ENCODE measurements at regions of chr6 and their contacts with region 1.

Region 1: DNA sequence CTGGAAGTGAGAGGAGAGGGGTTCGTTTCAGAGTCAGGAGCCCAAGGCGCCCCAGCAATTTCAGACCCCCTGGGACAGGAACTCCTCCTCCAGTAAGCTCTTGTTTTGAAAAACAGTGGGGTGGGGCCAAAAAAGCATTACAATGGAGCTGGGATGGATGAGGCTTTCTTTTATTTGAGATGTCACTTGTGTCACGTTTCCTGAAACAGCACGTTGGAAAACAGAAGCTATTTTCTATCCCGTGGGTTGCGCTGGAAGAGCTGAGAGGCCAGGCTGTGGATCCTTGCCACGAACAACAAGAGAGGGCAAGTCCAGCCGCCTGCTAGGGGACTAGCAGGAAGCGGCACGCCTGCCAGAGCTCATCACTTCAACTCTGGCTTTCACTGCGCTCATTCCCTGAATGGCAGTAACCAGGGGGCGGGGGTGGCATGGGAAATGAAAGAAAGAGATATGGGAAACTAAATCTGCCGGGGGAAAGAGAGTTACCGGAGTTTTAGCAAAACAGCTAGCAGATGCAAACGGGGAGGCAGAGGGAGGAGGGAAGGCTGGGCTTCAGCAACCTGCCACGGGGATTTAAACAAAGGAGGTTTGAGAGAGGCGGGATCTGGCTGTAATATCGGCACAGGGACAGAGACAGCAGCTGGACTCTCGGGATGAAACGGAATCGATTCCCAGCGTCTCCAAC is 34.6 kb downstream of the GCNT2 start:
- DNase-seq: no peak
- ATAC-seq: no peak
- H3K4me3 ChIP-seq: no peak overlapping the region
- H3K4me3 Mint-ChIP-seq: no peak overlapping the region
- H3K27ac ChIP-seq: no peak overlapping the region
- H3K27ac Mint-ChIP-seq: no peak overlapping the region
- H3K4me1 ChIP-seq: peaks cover 10 to 15% of the 10 kb centered on the region in 2 donors
- H3K4me1 Mint-ChIP-seq: peaks cover 56% of the 10 kb centered on the region
- H3K27me3 ChIP-seq: no peaks in the 10 kb centered on the region
- H3K27me3 Mint-ChIP-seq: no peaks in the 10 kb centered on the region
- CTCF ChIP-seq: no peak

Region 2: GRCh38 chr6:10545482-10545881 is 10.3 kb before region 1 on chr6:
- CTCF ChIA-PET with region 1: interaction called, 12 read pairs
- POLR2A ChIA-PET with region 1: no interaction called
- intact Hi-C with region 1: loop called (anchors 1 kb)
- DNase-seq: no peak
- ATAC-seq: no peak
- H3K4me3 ChIP-seq: no peak overlapping the region
- H3K4me3 Mint-ChIP-seq: no peak overlapping the region
- H3K27ac ChIP-seq: no peak overlapping the region
- H3K27ac Mint-ChIP-seq: peak overlapping the region; percentile 17
- H3K4me1 ChIP-seq: peaks cover 7 to 11% of the 10 kb centered on the region in 2 donors
- H3K4me1 Mint-ChIP-seq: peaks cover 41% of the 10 kb centered on the region
- H3K27me3 ChIP-seq: no peaks in the 10 kb centered on the region
- H3K27me3 Mint-ChIP-seq: no peaks in the 10 kb centered on the region
- CTCF ChIP-seq: no peak

Region 3: GRCh38 chr6:10595731-10596664 is 40.2 kb after region 1 on chr6:
- CTCF ChIA-PET with region 1: no interaction called
- POLR2A ChIA-PET with region 1: no interaction called
- intact Hi-C with region 1: no loop called
- DNase-seq: no peak
- ATAC-seq: peak; percentile 21
- H3K4me3 ChIP-seq: no peak overlapping the region
- H3K4me3 Mint-ChIP-seq: no peak overlapping the region
- H3K27ac ChIP-seq: no peak overlapping the region
- H3K27ac Mint-ChIP-seq: no peak overlapping the region
- H3K4me1 ChIP-seq: peaks cover 8 to 10% of the 10 kb centered on the region in 2 donors
- H3K4me1 Mint-ChIP-seq: peaks cover 58% of the 10 kb centered on the region
- H3K27me3 ChIP-seq: no peaks in the 10 kb centered on the region
- H3K27me3 Mint-ChIP-seq: no peaks in the 10 kb centered on the region
- CTCF ChIP-seq: no peak